BJ (cell line): ENCODE measurements at regions of chr10 and their contacts with region 1.

Region 1: DNA sequence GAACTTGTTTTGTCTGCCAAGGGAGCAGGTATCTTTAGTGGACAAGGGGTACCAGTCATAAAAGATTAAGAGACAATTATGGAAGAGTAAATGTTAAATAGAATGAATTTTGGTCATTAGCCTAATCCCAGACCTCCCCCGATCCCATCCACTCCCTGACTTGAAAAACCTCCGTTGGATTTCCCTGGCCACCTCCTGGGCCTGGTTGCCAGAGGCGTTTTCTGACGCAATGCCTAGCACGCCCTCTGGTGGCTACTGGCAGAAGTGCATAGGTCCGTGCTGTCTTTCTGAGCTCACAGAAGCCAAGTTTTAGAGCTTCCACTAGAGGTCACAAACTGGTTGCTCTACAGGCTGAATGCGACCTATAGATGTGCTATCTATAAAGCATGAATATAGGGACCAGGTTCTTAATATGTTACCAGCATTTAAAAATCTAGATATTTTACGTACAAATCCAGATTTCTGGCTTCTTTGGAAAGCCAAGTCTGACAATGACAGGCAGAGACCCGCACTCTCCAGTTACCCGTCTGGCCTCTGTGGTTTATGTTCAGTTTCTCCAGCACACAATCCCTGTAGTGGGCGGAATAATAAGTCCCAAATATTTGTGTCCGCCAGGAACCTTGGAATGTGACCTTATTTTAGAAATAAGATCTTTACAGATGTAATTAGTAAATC is 39.8 kb downstream of the SPOCK2 start:
- DNase-seq: peak; percentile 51
- H3K4me3 ChIP-seq: no peak overlapping the region
- H3K27me3 ChIP-seq: peaks cover 2% of the 10 kb centered on the region; the same call in 1 of the 2 replicates
- CTCF ChIP-seq: peak; percentile 99

Region 2: GRCh38 chr10:71899665-71900412 is 148.7 kb before region 1 on chr10:
- CTCF ChIA-PET with region 1: interaction called, 51 read pairs
- POLR2A ChIA-PET with region 1: no interaction called
- DNase-seq: no peak
- H3K4me3 ChIP-seq: no peak overlapping the region
- H3K27me3 ChIP-seq: no peaks in the 10 kb centered on the region
- CTCF ChIP-seq: no peak

Region 3: GRCh38 chr10:71957546-71958275 is 90.9 kb before region 1 on chr10:
- CTCF ChIA-PET with region 1: interaction called, 237 read pairs
- POLR2A ChIA-PET with region 1: no interaction called
- DNase-seq: no peak
- H3K4me3 ChIP-seq: no peak overlapping the region
- H3K27me3 ChIP-seq: no peaks in the 10 kb centered on the region
- CTCF ChIP-seq: peak; percentile 40

Region 4: DNA sequence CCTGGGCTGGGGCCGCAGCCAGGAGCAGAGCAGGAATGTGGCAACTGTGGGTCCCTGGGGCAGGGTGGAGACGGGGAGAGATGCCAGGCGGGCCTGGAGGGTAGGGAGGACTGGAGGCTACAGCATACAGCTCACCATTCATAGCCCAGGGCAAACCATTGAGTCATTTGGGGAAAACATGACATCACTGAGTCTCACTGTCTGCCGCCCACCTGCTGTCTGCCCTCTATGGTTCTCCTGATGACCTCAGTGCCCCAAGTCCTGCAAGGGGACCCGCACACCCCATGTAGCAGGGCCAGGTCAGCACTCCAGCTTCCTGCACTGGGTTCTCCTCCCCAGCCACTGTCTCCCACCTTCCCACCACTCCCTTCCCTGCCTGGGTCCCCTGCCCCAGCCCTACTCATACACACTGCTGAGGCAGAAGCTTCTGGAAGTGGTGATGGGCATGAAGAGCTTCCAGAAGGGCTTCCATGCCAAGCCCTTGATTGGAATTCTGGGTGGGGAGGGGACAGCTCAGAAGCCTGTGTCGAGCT is 74.0 kb before region 1 on chr10:
- CTCF ChIA-PET with region 1: interaction called, 10 read pairs
- POLR2A ChIA-PET with region 1: interaction called, 4 read pairs
- DNase-seq: no peak
- H3K4me3 ChIP-seq: no peak overlapping the region
- H3K27me3 ChIP-seq: no peaks in the 10 kb centered on the region
- CTCF ChIP-seq: no peak

Region 5: GRCh38 chr10:72038458-72039001 is 10.1 kb before region 1 on chr10:
- CTCF ChIA-PET with region 1: interaction called, 17 read pairs
- POLR2A ChIA-PET with region 1: no interaction called
- DNase-seq: peak; percentile 38
- H3K4me3 ChIP-seq: no peak overlapping the region
- H3K27me3 ChIP-seq: no peaks in the 10 kb centered on the region
- CTCF ChIP-seq: no peak

Region 6: GRCh38 chr10:72223743-72224101 is 175.1 kb after region 1 on chr10:
- CTCF ChIA-PET with region 1: interaction called, 37 read pairs
- POLR2A ChIA-PET with region 1: interaction called, 11 read pairs
- DNase-seq: no peak
- H3K4me3 ChIP-seq: no peak overlapping the region
- H3K27me3 ChIP-seq: no peaks in the 10 kb centered on the region
- CTCF ChIP-seq: no peak